CD8-positive, alpha-beta T cell (primary cell): ENCODE measurements at regions of chr2 and their contacts with region 1.

Region 1: GRCh38 chr2:121649596-121650314 is 493 bp upstream of the CLASP1 start:
- DNase-seq: peak; percentile 90 to 99 (median 95)
- ATAC-seq: peak; percentile 94
- H3K4me3 ChIP-seq: peak overlapping the region; percentile 84 to 95
- H3K4me3 Mint-ChIP-seq: peak overlapping the region; percentile 97
- H3K27ac ChIP-seq: peak overlapping the region; percentile 87 to 92
- H3K27ac Mint-ChIP-seq: peak overlapping the region; percentile 99
- H3K4me1 ChIP-seq: peaks cover 28% of the 10 kb centered on the region
- H3K4me1 Mint-ChIP-seq: peaks cover 69% of the 10 kb centered on the region
- H3K27me3 ChIP-seq: no peaks in the 10 kb centered on the region
- H3K27me3 Mint-ChIP-seq: no peaks in the 10 kb centered on the region
- CTCF ChIP-seq: no peak

Region 2: DNA sequence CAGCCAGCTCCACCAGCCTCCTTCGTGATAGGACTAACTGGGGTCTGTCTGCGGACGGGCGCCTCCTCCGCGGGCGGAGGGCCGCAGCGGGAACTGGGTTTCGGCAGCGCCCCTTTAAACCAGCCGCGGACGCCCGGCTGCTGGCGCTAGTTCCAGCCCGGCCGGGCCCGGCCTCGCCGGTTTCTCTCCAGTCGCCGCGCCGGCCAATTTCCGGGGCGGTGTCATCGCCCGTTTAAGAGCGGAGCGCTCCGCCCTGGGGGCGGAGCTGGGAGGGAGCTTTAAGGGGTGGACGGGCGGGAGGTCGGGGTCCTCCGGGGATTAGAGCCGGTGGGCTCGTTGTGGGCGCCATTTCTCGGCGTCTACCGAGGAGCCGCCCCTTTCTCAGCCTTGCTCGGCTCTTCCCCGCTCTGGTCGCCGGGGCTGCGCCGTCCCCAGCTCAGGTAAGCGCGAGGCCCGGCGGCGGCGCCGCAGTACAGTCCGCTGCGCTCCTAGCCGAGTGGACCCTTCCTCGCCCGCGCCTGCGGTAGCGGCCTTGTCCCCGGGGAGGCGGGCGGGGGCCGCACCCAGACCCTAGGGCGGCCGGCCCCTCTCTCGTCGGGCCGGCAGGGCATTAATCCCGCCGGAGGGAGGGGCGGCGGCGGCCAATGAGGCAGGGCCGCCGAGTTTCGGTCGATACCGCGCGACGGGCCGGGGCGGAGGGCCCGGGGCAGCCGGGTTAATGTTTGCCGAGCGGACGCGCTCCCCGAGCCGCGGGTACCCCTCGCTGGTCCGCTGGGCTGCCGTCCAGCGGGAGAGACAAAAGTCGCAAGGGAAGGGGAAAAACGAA is 1636.8 kb before region 1 on chr2 and contains the start of gene EPB41L5:
- CTCF ChIA-PET with region 1: no interaction called
- POLR2A ChIA-PET with region 1: no interaction called
- intact Hi-C with region 1: loop called in 1 of 2 experiments (anchors 10 kb)
- DNase-seq: peak; percentile 50 to 88 (median 80)
- ATAC-seq: peak; percentile 92
- H3K4me3 ChIP-seq: peak within 1 kb of the TSS; percentile 68 to 82
- H3K4me3 Mint-ChIP-seq: peak within 1 kb of the TSS; percentile 85
- H3K27ac ChIP-seq: peak within 1 kb of the TSS; percentile 32 to 44
- H3K27ac Mint-ChIP-seq: peak within 1 kb of the TSS; percentile 62
- H3K4me1 ChIP-seq: peaks cover 18% of the 10 kb centered on the region
- H3K4me1 Mint-ChIP-seq: peaks cover 26% of the 10 kb centered on the region
- H3K27me3 ChIP-seq: no peaks in the 10 kb centered on the region
- H3K27me3 Mint-ChIP-seq: no peaks in the 10 kb centered on the region
- CTCF ChIP-seq: no peak
- total RNA-seq, gene EPB41L5: 5.1 to 5.8 TPM

Region 3: DNA sequence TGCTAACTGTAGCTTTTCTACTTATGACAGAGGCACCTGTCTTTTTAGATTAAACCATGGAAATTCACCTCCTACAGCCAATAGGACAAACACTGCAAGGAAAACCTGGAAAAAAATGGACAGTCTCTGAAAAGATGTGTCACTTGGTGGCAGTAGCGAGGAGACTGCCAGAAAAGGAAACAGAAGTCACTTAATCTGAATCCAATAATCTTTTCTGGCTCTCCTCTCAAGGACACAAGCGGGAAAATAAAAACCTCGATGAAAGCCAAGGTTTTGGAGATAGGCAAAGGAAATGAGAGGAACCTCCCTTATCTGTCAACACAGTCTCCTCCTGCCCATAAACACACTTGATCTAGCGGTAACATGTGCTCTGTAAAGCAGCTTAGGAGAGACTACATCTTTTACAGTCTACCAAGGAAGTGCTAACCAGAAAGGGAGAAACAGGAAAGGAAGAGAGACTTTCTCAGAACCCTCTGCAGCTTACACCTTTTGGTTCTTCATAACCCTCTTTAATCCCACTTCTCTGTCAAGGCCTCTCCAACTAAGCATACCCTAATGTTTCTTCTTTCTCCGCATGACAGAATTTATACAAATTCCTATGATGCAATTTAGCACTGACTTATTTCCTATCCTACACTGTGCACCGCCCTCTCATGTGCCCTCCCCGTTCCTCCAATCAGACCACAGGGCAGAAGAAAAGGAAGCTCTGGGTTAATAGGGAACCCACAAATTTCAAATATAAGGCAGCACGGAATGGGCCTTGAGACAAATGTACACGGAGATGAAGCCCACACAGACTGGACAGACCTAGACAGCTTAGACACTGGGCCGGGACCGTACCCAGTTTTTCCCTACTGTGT is 53.3 kb before region 1 on chr2:
- CTCF ChIA-PET with region 1: no interaction called
- POLR2A ChIA-PET with region 1: interaction called, 12 read pairs
- intact Hi-C with region 1: loop called (anchors 2 to 5 kb)
- DNase-seq: peak in 2 of 9 experiments; percentile 18 to 39
- ATAC-seq: peak; percentile 65
- H3K4me3 ChIP-seq: no peak overlapping the region
- H3K4me3 Mint-ChIP-seq: peak overlapping the region; percentile 54
- H3K27ac ChIP-seq: peak overlapping the region in 1 of 2 experiments; percentile 55
- H3K27ac Mint-ChIP-seq: peak overlapping the region; percentile 78
- H3K4me1 ChIP-seq: peaks cover 31% of the 10 kb centered on the region
- H3K4me1 Mint-ChIP-seq: peaks cover 60% of the 10 kb centered on the region
- H3K27me3 ChIP-seq: no peaks in the 10 kb centered on the region
- H3K27me3 Mint-ChIP-seq: no peaks in the 10 kb centered on the region
- CTCF ChIP-seq: no peak

Region 4: GRCh38 chr2:121699421-121700333 is 49.9 kb after region 1 on chr2:
- CTCF ChIA-PET with region 1: interaction called, 6 read pairs
- POLR2A ChIA-PET with region 1: interaction called, 21 read pairs
- intact Hi-C with region 1: loop called (anchors 1 kb)
- DNase-seq: peak; percentile 68 to 95 (median 83)
- ATAC-seq: peak; percentile 89
- H3K4me3 ChIP-seq: peak overlapping the region; percentile 34 to 36
- H3K4me3 Mint-ChIP-seq: peak overlapping the region; percentile 82
- H3K27ac ChIP-seq: peak overlapping the region; percentile 22 to 83
- H3K27ac Mint-ChIP-seq: peak overlapping the region; percentile 96
- H3K4me1 ChIP-seq: peaks cover 27% of the 10 kb centered on the region
- H3K4me1 Mint-ChIP-seq: peaks cover 31% of the 10 kb centered on the region
- H3K27me3 ChIP-seq: no peaks in the 10 kb centered on the region
- H3K27me3 Mint-ChIP-seq: no peaks in the 10 kb centered on the region
- CTCF ChIP-seq: no peak

Region 5: DNA sequence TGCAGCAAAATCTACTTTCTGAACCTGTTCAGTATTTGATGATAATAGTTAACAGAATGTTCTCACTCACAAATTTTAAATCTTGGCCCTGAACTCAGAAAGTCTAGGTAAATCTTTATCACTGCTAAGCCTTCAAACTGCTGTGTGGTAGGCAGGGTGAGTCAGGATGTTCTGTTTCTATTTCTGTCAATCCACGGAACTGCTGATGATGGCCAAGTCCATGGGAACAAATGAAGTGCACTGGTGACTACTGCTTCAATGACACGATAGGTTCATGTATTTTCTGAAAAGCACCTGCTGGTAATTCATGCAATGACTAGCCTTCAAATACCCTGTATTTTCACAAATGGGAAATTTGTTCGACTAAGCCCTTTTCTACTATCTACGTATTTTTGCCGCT is 72.7 kb after region 1 on chr2:
- CTCF ChIA-PET with region 1: interaction called, 3 read pairs
- POLR2A ChIA-PET with region 1: interaction called, 3 read pairs
- intact Hi-C with region 1: loop called (anchors 1 kb)
- DNase-seq: no peak
- ATAC-seq: no peak
- H3K4me3 ChIP-seq: no peak overlapping the region
- H3K4me3 Mint-ChIP-seq: no peak overlapping the region
- H3K27ac ChIP-seq: no peak overlapping the region
- H3K27ac Mint-ChIP-seq: no peak overlapping the region
- H3K4me1 ChIP-seq: no peaks in the 10 kb centered on the region
- H3K4me1 Mint-ChIP-seq: peaks cover 3% of the 10 kb centered on the region
- H3K27me3 ChIP-seq: no peaks in the 10 kb centered on the region
- H3K27me3 Mint-ChIP-seq: no peaks in the 10 kb centered on the region
- CTCF ChIP-seq: no peak

Region 6: DNA sequence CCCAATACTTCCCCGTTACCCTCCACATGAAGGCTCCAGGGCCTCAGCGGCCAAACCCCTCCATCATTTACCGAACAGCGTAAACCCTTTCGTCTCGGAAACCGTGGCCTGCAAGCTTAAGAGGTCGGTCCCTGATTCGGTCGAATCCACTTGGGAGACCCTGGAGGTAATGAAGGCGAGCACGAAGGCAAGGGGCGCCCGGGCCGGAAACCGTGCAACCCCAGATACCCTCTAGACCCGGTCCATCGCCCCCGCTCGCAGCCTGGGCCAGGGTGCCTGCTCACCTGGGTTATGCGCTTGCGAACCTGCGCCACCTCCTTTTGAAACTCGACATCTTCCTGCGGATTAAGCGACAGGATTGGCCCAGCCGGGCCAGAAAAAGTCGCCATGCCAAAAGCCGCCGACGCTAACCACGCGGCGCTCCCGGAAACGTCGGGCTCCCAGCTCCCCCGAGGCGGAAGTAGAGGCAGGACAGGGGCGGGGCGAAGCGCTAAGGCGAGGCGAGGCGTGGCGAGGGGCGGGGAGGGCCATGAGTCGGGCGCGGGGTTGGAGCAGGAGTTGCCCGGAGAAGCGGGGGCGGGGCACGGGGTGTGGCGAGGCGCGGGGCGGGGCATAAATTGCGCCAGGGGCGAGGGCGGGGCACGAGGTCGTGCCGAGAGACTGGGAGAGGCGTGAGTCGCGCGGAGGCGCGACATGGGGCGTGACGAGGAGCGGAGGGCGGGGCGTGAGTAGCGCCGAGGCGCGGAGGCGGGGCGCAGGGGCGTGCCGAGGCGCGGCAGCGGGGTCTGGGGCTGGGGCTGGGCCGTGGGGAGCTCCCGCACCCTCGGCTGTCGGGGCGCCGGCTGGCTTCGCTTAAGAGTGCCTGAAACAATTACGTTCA is 86.9 kb after region 1 on chr2 and contains the start of gene NIFK:
- CTCF ChIA-PET with region 1: interaction called, 3 read pairs
- POLR2A ChIA-PET with region 1: interaction called, 13 read pairs
- intact Hi-C with region 1: loop called (anchors 1 kb)
- DNase-seq: peak; percentile 99 to 100 (median 100)
- ATAC-seq: peak; percentile 90
- H3K4me3 ChIP-seq: peak within 1 kb of the TSS; percentile 78 to 96
- H3K4me3 Mint-ChIP-seq: peak within 1 kb of the TSS; percentile 96
- H3K27ac ChIP-seq: peak within 1 kb of the TSS; percentile 83 to 88
- H3K27ac Mint-ChIP-seq: peak within 1 kb of the TSS; percentile 97
- H3K4me1 ChIP-seq: peaks cover 32% of the 10 kb centered on the region
- H3K4me1 Mint-ChIP-seq: peaks cover 46% of the 10 kb centered on the region
- H3K27me3 ChIP-seq: no peaks in the 10 kb centered on the region
- H3K27me3 Mint-ChIP-seq: no peaks in the 10 kb centered on the region
- CTCF ChIP-seq: no peak
- total RNA-seq, gene NIFK: 43.0 to 49.6 TPM

Region 7: DNA sequence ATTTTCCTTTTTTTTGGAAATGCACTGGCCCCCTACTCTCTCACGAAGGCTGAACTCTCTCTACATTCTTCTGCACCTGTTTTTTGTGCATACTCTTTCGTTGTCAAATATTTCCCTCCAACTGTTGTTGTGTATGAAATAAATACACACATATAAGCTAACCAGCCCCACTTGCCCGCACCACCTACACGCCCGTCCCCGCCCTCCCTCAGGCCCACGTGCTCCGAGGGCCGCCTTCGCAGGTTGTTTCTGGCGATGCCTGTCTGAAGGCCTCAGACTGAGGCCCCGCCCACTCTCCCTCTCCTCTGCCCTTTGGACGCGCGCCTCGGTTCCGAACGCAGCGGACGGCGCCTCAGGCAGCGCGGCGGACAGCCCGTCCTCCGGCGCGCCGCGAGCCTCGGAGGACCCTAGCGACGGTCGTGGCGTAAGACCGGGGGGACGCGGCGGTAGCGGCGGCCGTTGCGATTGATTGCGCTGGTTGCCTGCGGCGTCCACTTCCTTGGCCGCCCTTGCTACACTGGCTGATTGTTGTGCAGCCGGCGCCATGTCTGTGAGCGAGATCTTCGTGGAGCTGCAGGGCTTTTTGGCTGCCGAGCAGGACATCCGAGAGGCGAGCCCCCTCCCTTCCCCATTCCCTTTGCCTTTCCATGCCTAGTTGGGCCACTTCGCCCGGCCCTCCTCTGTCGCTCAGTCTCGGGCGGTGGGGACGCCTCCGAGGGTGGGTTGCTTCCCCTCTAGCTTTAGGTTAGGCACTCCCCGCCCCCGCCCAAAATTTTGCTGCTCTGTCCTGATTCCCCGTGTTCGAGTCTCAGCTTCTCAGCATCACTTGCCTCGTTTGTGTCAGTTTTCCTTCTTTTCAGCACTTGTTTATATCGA is 105.7 kb after region 1 on chr2 and contains the start of gene TSN:
- CTCF ChIA-PET with region 1: no interaction called
- POLR2A ChIA-PET with region 1: interaction called, 3 read pairs
- intact Hi-C with region 1: loop called (anchors 1 kb)
- DNase-seq: peak; percentile 95 to 99 (median 98)
- ATAC-seq: peak; percentile 99
- H3K4me3 ChIP-seq: peak within 1 kb of the TSS; percentile 81 to 98
- H3K4me3 Mint-ChIP-seq: peak within 1 kb of the TSS; percentile 95
- H3K27ac ChIP-seq: peak within 1 kb of the TSS; percentile 65 to 85
- H3K27ac Mint-ChIP-seq: peak within 1 kb of the TSS; percentile 92
- H3K4me1 ChIP-seq: peaks cover 20% of the 10 kb centered on the region
- H3K4me1 Mint-ChIP-seq: peaks cover 27% of the 10 kb centered on the region
- H3K27me3 ChIP-seq: no peaks in the 10 kb centered on the region
- H3K27me3 Mint-ChIP-seq: no peaks in the 10 kb centered on the region
- CTCF ChIP-seq: no peak
- total RNA-seq, gene TSN: 66.8 to 75.2 TPM